ENCODE measurements at regions of chr7 and their contacts with region 1.

Region 1: DNA sequence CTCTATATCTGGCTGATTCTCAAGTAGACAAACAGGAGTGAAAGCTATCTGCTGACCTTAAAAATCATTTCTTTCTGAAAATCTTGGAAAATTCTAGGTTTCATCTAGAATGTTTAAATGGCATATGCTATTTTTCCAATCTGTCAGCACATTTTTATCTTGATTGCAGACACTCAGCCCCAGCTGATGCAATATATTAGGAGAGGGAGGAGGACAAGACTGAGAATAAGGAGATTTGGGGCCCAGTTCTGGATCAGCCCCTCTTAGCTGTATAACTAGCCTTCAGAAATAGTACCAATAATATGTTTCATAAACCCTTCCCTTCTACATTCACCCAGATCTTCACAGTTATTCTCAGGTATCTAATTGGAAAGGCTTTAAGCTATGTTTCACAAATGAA is 131.2 kb downstream of the HDAC9 start:
- DNase-seq: no peak
- CTCF ChIP-seq: no peak

Region 2: GRCh38 chr7:18638594-18639452 is 12.1 kb after region 1 on chr7:
- CTCF ChIA-PET with region 1: interaction called, 21 read pairs
- POLR2A ChIA-PET with region 1: no interaction called
- DNase-seq: no peak
- CTCF ChIP-seq: no peak

Region 3: DNA sequence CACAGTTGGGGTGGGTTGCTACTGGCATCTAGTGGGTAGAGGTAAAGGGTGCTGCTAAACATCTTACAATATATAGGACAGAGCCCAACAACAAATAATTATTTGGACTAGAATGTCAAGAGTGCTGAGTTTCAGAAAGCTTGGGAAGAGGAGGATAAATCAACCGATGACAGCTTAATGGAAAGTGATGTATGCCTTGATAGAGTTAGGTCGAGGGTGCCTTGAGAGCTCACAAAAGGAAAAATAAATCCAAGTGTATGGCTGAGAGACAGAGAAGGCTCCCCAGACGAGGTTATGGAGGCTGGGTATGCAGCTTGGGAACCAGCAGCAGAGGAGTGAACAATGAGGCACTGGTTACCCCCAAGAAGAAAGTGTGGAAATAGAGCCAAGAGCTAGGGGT is 80.0 kb after region 1 on chr7:
- CTCF ChIA-PET with region 1: no interaction called
- POLR2A ChIA-PET with region 1: no interaction called
- DNase-seq: no peak
- CTCF ChIP-seq: no peak

Measured in GM10248 (cell line).